Psoas muscle (tissue), 8 donors: ENCODE measurements at regions of chr12 and their contacts with region 1.

Region 1: GRCh38 chr12:55760663-55761062 is 17.7 kb downstream of the GDF11 start:
- DNase-seq: no peak
- ATAC-seq: peak in 1 of 4 donors; percentile 21
- H3K4me3 ChIP-seq: no peak overlapping the region
- H3K27ac ChIP-seq: no peak overlapping the region
- H3K4me1 ChIP-seq: no peaks in the 10 kb centered on the region
- H3K27me3 ChIP-seq: no peaks in the 10 kb centered on the region
- CTCF ChIP-seq: no peak

Region 2: GRCh38 chr12:55446326-55446725 is 314.3 kb before region 1 on chr12:
- intact Hi-C with region 1: no loop called
- DNase-seq: no peak
- ATAC-seq: no peak
- H3K4me3 ChIP-seq: no peak overlapping the region
- H3K27ac ChIP-seq: no peak overlapping the region
- H3K4me1 ChIP-seq: no peaks in the 10 kb centered on the region
- H3K27me3 ChIP-seq: no peaks in the 10 kb centered on the region
- CTCF ChIP-seq: no peak

Region 3: DNA sequence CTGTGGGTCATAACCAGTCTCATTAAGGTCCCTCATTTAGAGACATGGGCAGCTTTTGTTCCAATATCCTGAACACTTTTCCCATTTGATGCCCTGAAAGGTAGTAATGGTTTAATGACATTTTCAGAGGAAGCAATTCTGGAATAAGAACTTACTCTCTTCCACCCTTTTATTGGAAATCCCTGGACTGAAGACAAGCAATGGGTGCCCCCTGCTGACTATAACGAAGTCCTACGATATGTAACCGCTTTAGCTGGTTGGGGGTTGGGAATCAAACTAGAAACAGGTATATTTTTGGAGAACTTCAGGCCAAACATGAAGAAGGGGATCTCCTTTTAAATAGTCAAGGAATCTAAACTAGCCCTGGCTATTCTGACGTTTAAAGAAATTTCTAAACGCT is 36.4 kb after region 1 on chr12:
- intact Hi-C with region 1: loop called in 1 of 2 experiments (anchors 1 kb)
- DNase-seq: no peak
- ATAC-seq: peak in 1 of 4 donors; percentile 53
- H3K4me3 ChIP-seq: no peak overlapping the region
- H3K27ac ChIP-seq: no peak overlapping the region
- H3K4me1 ChIP-seq: no peaks in the 10 kb centered on the region
- H3K27me3 ChIP-seq: no peaks in the 10 kb centered on the region
- CTCF ChIP-seq: peak; percentile 50